ENCODE measurements at regions of chr3 and their contacts with region 1.

Region 1: DNA sequence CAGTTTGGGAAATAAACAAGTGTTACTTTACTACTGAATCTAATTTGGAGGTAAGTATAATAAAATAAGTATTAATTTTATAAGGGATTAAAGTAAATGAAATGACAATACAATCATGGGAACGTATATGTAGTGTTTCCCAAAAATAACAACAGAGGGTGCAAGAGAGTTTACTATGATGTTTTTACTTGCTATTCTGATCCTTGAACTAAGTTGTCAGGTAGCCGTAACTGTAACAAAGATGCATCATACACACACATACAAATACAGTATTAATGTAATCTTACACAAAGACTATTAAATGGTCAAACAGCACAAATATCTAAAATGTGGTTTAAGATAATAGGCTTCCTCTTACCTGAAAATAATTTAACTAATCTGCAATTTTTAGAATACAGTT is 311.4 kb downstream of the TBC1D5 start:
- DNase-seq: peak; percentile 49
- H3K4me3 ChIP-seq: no peak overlapping the region
- H3K27ac ChIP-seq: no peak overlapping the region
- H3K4me1 ChIP-seq: no peaks in the 10 kb centered on the region
- H3K27me3 ChIP-seq: no peaks in the 10 kb centered on the region
- CTCF ChIP-seq: peak in 1 of 2 donors; percentile 14
- POLR2A ChIP-seq: no peak

Region 2: DNA sequence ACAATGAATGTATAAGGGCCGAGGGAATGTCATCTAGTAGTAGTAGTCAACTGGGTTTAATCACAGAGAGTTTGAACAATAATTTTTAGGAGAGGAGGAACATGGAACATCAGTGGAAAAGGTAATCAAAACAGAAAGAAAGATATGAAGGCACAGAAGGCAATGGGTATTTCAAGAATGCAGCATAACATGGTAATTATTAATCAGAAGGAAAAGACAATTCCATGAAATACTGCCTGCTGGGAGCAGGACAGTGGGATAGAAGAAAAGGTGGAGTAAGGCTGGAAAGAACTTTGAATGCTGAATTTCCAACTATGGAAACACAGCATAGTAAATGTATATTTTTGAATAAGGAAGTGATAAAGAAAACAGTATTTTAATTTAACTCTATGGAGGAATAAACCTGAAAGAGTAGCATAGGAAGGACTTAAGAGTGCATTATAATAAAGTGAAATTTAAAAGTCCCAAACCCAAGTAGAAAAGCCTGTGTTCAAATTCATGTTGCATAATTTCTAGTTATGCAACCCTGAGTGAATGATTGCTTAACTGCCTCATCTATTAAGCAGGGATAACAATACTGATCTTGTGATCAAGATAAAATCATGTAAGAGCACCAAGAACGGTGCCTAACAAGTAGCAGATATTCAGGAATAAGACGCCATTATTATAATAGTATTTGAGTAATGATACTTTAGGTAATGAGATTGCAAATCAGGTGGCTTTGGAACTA is 46.3 kb before region 1 on chr3:
- CTCF ChIA-PET with region 1: no interaction called
- POLR2A ChIA-PET with region 1: no interaction called
- dilution Hi-C with region 1: no loop called
- intact Hi-C with region 1: loop called (anchors 1 kb)
- DNase-seq: no peak
- H3K4me3 ChIP-seq: no peak overlapping the region
- H3K27ac ChIP-seq: no peak overlapping the region
- H3K4me1 ChIP-seq: no peaks in the 10 kb centered on the region
- H3K27me3 ChIP-seq: no peaks in the 10 kb centered on the region
- CTCF ChIP-seq: no peak
- POLR2A ChIP-seq: no peak

Measured in endothelial cell of umbilical vein (primary cell).